ENCODE measurements at regions of chr7 and their contacts with region 1.

Region 1: GRCh38 chr7:75994388-75995051 is at the start of gene TMEM120A:
- DNase-seq: peak; percentile 98 to 99 (median 98)
- ATAC-seq: peak; percentile 89 to 93 (median 90)
- H3K4me3 ChIP-seq: peak within 1 kb of the TSS; percentile 60 to 97 (median 82)
- H3K27ac ChIP-seq: peak within 1 kb of the TSS; percentile 91 to 100 (median 96)
- H3K4me1 ChIP-seq: peaks cover 6 to 50% (median 36%) of the 10 kb centered on the region in 12 donors
- H3K27me3 ChIP-seq: no peaks in the 10 kb centered on the region
- CTCF ChIP-seq: peak in 9 of 12 donors; percentile 12 to 53 (median 32)
- POLR2A ChIP-seq: peak; percentile 46 to 95
- total RNA-seq, gene TMEM120A: 63.8 to 181 (median 125) TPM

Region 2: DNA sequence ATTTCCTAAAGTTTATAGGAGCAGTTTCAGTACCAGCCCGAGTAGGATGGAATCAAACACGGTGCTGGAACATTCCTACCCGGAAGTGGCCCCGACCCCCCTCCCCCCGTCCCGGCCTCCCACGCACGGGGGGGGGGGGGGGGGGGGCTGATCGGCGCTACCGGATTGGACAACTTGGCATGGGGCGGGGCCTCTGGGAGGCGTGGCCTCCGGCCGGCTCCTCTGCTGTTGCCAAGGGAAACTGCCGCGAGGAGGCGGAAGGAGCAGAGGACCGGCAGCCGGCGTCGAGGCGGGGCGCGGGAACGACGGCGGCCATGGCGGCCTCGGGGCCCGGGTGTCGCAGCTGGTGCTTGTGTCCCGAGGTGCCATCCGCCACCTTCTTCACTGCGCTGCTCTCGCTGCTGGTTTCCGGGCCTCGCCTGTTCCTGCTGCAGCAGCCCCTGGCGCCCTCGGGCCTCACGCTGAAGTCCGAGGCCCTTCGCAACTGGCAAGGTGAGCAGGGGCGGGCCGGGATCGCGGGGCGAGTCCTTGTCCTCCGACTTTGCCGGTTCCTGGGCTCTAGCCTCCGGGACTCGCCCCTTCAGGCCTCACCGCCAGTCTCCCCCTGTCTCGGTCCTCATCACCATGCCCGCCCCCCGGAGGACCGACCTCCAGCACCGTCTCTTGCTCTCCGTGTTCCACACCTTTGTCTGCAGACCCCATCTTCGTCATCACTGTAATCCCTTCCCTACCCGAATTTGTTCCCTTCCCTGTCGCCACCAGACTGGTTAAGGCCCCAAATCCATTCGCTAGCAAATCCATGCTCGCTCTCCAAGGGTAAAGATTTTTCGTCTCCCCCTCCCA is 115.5 kb before region 1 on chr7 and contains the start of gene RHBDD2:
- intact Hi-C with region 1: loop called in 2 of 10 experiments (anchors 10 kb)
- DNase-seq: peak; percentile 96 to 98 (median 97)
- ATAC-seq: peak; percentile 97 to 100 (median 99)
- H3K4me3 ChIP-seq: peak within 1 kb of the TSS; percentile 45 to 98 (median 88)
- H3K27ac ChIP-seq: peak within 1 kb of the TSS; percentile 11 to 89 (median 85)
- H3K4me1 ChIP-seq: peaks cover 0 to 43% (median 15%) of the 10 kb centered on the region in 12 donors
- H3K27me3 ChIP-seq: no peaks in the 10 kb centered on the region
- CTCF ChIP-seq: peak in 7 of 12 donors; percentile 3 to 50 (median 26)
- POLR2A ChIP-seq: peak; percentile 90 to 99
- total RNA-seq, gene RHBDD2: 23.6 to 44.1 (median 32.5) TPM

Region 3: DNA sequence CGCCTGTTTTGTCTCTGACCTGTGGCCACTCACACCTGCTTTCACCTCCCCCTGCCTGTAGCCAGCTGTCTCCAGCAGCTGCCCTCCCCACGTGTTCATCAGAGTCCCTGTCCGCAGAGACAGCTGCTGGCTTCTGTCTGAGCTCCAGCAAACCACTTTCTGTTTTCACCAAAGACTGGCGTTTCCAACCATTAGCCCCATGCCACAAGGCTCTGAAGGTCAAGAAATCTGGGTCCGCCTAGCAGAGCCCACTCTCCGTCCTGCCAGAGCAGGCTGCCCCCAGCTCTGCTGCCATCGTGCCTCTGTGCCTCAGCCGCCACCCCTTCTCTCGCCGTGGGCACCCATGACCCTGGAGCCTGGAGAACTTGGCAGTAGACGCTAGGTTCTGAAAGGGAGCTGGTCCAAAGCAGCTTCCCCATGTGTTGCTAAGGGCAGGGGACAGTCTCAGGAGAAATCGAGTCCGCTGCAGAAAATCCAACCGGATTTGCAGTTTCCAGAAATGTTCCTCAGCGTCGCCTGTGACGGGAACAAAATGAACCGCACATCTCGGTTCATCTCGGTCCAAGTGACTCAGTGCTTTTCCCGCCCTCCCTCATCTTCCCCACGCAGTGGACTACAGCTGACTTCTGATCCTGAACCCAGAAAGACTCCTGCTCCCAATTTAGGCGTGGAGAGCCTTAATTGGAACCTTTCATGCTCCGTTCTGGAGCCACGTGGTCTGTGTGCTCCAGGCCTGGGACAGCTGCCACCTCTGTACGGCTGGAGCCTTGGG is 28.1 kb before region 1 on chr7:
- intact Hi-C with region 1: loop called in 1 of 10 experiments (anchors 5 kb)
- DNase-seq: peak in 4 of 5 donors; percentile 66 to 77 (median 74)
- ATAC-seq: peak; percentile 59 to 64 (median 61)
- H3K4me3 ChIP-seq: peak overlapping the region in 5 of 12 donors; percentile 7 to 20 (median 18)
- H3K27ac ChIP-seq: peak overlapping the region; percentile 74 to 93 (median 83)
- H3K4me1 ChIP-seq: peaks cover 14 to 83% (median 70%) of the 10 kb centered on the region in 12 donors
- H3K27me3 ChIP-seq: no peaks in the 10 kb centered on the region
- CTCF ChIP-seq: no peak
- POLR2A ChIP-seq: no peak

Region 4: GRCh38 chr7:76037310-76037709 is 42.8 kb after region 1 on chr7:
- intact Hi-C with region 1: no loop called
- DNase-seq: no peak
- ATAC-seq: peak in 1 of 4 donors; percentile 54
- H3K4me3 ChIP-seq: no peak overlapping the region
- H3K27ac ChIP-seq: no peak overlapping the region
- H3K4me1 ChIP-seq: peaks cover 0 to 7% (median 0%) of the 10 kb centered on the region in 12 donors
- H3K27me3 ChIP-seq: no peaks in the 10 kb centered on the region
- CTCF ChIP-seq: no peak
- POLR2A ChIP-seq: no peak

Region 5: GRCh38 chr7:76047811-76048667 is 53.5 kb after region 1 on chr7 and contains the starts of genes MDH2 and STYXL1:
- intact Hi-C with region 1: loop called in 1 of 10 experiments (anchors 5 kb)
- DNase-seq: peak; percentile 95 to 98 (median 96)
- ATAC-seq: peak; percentile 96 to 98 (median 98)
- H3K4me3 ChIP-seq: peak within 1 kb of the TSS; percentile 68 to 100 (median 90)
- H3K27ac ChIP-seq: peak within 1 kb of the TSS; percentile 80 to 98 (median 94)
- H3K4me1 ChIP-seq: peaks cover 0 to 59% (median 29%) of the 10 kb centered on the region in 12 donors
- H3K27me3 ChIP-seq: no peaks in the 10 kb centered on the region
- CTCF ChIP-seq: no peak
- POLR2A ChIP-seq: peak; percentile 12 to 83
- total RNA-seq, gene MDH2: 303 to 591 (median 409) TPM
- total RNA-seq, gene STYXL1: 7.9 to 26.8 (median 16.1) TPM